H1 (cell line): ENCODE measurements at regions of chr17 and their contacts with region 1.

Region 1: GRCh38 chr17:65556014-65556909 is 5.2 kb downstream of the AXIN2 start:
- DNase-seq: peak in 1 of 2 experiments; percentile 96
- H3K4me3 ChIP-seq: peak overlapping the region; percentile 15 to 92 (median 61); a peak in 5 of 8 replicates
- H3K27ac ChIP-seq: no peak overlapping the region
- H3K4me1 ChIP-seq: peaks cover 16 to 26% (median 21%) of the 10 kb centered on the region in 4 experiments
- H3K27me3 ChIP-seq: peaks cover 0 to 2% (median 0%) of the 10 kb centered on the region in 4 experiments; a peak in 2 of 7 replicates
- CTCF ChIP-seq: peak; percentile 84 to 91 (median 86)
- EP300 ChIP-seq: no peak
- POLR2A ChIP-seq: no peak
- RAD21 ChIP-seq: peak; percentile 80 to 87

Region 2: DNA sequence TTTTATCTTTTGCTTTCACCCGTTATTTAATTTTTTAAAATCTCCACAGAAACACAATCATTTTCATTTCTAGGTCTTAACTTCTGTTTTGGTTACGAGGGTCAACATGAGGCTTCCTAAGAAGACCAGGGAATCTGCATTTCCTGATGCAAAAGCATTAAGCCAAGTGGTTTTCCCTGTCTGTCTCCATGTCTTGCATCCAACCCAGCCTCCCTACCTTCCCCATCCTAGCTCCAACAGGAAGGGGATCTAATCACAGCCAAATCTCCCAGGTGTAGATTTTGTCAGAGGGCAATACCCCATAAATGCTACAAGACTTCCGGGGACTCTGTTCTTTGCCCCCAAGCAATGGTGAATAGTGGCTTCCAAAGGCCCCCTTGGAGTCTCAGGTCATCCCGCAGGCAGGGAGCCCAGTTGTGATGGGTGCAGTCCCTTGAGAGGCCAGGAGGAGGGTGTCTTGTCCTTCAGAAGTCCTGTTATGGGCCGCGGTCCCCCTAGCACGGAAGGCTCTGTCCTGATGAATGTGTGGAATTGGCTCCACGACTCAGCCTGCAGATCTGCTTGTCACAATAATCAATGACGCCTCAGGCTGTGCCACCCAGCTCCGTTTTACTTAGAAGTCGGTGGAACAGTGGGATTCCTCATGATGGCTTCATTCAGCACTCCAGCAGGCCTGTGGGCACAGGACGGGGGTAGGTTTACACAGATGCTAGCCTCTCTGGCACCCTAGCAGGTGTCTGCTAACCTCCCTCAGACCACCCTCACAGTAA is 278.0 kb before region 1 on chr17:
- CTCF ChIA-PET with region 1: interaction called, 12 read pairs
- POLR2A ChIA-PET with region 1: no interaction called
- DNase-seq: peak in 1 of 2 experiments; percentile 78
- H3K4me3 ChIP-seq: no peak overlapping the region
- H3K27ac ChIP-seq: no peak overlapping the region
- H3K4me1 ChIP-seq: peaks cover 0 to 6% (median 0%) of the 10 kb centered on the region in 4 experiments; a peak in 2 of 7 replicates
- H3K27me3 ChIP-seq: no peaks in the 10 kb centered on the region
- CTCF ChIP-seq: peak; percentile 84 to 92 (median 88)
- EP300 ChIP-seq: no peak
- POLR2A ChIP-seq: no peak
- RAD21 ChIP-seq: peak; percentile 96 to 97

Region 3: DNA sequence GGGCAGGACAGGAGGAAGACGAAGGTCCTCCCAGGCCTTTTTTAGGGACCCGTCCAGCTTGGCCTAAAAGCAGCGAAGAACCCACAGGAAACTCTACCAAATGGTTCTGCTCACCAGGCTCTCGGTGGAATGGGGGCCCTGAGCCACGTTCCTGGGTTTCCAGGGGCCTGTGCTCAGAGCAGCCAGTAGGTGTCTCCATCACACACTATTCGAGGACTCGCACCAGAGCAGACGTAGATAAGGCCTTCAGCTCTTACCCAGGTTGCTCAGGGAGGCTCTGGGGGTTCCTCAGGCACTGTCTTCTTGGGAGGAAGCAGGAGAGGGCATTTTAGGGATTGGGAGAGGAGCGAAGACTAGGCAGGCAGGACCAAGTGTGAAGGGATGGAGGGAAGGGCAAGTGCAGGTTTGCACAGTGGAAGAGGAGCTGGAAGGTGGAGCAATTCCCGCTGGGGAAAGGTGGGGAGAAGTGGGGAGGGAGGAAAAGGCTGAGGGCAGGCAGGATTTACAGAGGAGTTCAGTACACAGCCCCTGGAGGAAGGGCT is 262.0 kb before region 1 on chr17:
- CTCF ChIA-PET with region 1: interaction called, 18 read pairs
- POLR2A ChIA-PET with region 1: no interaction called
- DNase-seq: peak; percentile 34 to 77
- H3K4me3 ChIP-seq: no peak overlapping the region
- H3K27ac ChIP-seq: no peak overlapping the region
- H3K4me1 ChIP-seq: peaks cover 0 to 10% (median 7%) of the 10 kb centered on the region in 4 experiments; a peak in 5 of 7 replicates
- H3K27me3 ChIP-seq: no peaks in the 10 kb centered on the region
- CTCF ChIP-seq: peak; percentile 80 to 96 (median 83)
- EP300 ChIP-seq: no peak
- POLR2A ChIP-seq: no peak
- RAD21 ChIP-seq: peak; percentile 86 to 93

Region 4: DNA sequence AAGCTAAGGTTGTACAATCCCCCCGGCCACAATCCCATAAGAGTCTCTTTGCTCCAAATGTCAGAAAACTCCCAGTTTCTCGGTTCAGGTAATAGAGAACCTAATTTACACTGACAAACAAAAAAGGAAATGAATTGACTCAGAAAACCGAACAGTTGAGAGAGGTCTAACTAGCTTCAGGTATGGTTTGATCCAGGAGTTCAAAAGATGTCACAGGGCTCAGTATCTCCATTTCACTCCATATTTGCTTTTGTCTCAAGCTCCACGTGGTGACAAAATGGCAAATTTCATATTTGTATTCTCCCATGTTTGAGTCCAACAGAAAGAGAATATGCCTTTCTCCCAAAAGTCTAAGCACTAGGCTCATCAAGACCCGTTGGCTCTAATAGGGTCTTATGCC is 112.2 kb before region 1 on chr17:
- CTCF ChIA-PET with region 1: no interaction called
- POLR2A ChIA-PET with region 1: no interaction called
- DNase-seq: no peak
- H3K4me3 ChIP-seq: no peak overlapping the region
- H3K27ac ChIP-seq: no peak overlapping the region
- H3K4me1 ChIP-seq: no peaks in the 10 kb centered on the region
- H3K27me3 ChIP-seq: no peaks in the 10 kb centered on the region
- CTCF ChIP-seq: no peak
- EP300 ChIP-seq: no peak
- POLR2A ChIP-seq: no peak
- RAD21 ChIP-seq: no peak

Region 5: GRCh38 chr17:65455972-65456343 is 100.3 kb before region 1 on chr17:
- CTCF ChIA-PET with region 1: interaction called, 22 read pairs
- POLR2A ChIA-PET with region 1: interaction called, 7 read pairs
- DNase-seq: peak; percentile 47 to 48
- H3K4me3 ChIP-seq: no peak overlapping the region
- H3K27ac ChIP-seq: no peak overlapping the region
- H3K4me1 ChIP-seq: peaks cover 8 to 21% (median 11%) of the 10 kb centered on the region in 4 experiments
- H3K27me3 ChIP-seq: no peaks in the 10 kb centered on the region; a peak in 2 of 7 replicates
- CTCF ChIP-seq: peak; percentile 56 to 74 (median 72)
- EP300 ChIP-seq: no peak
- POLR2A ChIP-seq: no peak
- RAD21 ChIP-seq: peak; percentile 87 to 94

Region 6: DNA sequence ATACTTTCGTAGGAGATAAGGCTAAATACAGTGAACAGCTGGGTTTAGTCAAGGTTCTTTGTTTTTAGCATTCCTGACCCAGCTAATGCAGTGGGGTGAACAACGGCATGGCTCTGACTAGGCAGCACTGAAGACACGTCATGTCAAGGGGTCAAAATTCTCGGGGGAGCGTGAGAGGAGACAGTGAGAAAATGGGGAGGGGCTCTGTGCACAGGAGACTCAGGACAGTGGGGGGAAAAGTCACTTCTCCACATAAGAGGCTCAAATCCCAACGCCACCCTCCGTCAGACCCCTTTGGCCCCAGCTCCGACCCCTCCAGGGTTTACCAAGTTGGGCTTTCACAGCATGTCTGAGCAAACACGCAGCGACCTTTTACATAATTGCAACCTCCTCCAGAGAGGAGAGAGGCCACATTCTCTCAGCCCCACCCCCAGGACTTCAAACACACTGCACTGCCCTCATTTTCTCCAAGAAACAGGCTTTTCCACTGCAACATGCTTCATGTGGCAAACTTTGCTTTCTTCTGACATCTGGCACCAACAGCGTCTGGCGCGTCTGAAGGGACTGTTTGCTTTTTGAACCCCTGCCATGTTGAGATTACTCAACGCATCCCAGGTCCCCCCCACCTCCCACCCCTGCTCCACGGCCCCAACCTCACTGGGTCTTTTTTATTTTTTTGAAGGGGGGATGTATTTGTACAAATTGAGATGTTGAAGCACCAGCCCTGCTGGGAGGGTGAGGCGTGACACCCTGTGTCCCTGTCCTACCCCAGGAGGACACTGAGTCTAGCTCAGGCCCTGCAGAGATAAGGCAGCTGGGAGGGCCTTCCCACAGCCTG is 24.8 kb before region 1 on chr17:
- CTCF ChIA-PET with region 1: interaction called, 11 read pairs
- POLR2A ChIA-PET with region 1: interaction called, 9 read pairs
- DNase-seq: no peak
- H3K4me3 ChIP-seq: no peak overlapping the region; a peak in 1 of 8 replicates
- H3K27ac ChIP-seq: no peak overlapping the region
- H3K4me1 ChIP-seq: peaks cover 6 to 22% (median 17%) of the 10 kb centered on the region in 4 experiments
- H3K27me3 ChIP-seq: no peaks in the 10 kb centered on the region
- CTCF ChIP-seq: no peak
- EP300 ChIP-seq: no peak
- POLR2A ChIP-seq: no peak
- RAD21 ChIP-seq: peak; percentile 0 to 18; a peak in 1 of 4 replicates

Region 7: DNA sequence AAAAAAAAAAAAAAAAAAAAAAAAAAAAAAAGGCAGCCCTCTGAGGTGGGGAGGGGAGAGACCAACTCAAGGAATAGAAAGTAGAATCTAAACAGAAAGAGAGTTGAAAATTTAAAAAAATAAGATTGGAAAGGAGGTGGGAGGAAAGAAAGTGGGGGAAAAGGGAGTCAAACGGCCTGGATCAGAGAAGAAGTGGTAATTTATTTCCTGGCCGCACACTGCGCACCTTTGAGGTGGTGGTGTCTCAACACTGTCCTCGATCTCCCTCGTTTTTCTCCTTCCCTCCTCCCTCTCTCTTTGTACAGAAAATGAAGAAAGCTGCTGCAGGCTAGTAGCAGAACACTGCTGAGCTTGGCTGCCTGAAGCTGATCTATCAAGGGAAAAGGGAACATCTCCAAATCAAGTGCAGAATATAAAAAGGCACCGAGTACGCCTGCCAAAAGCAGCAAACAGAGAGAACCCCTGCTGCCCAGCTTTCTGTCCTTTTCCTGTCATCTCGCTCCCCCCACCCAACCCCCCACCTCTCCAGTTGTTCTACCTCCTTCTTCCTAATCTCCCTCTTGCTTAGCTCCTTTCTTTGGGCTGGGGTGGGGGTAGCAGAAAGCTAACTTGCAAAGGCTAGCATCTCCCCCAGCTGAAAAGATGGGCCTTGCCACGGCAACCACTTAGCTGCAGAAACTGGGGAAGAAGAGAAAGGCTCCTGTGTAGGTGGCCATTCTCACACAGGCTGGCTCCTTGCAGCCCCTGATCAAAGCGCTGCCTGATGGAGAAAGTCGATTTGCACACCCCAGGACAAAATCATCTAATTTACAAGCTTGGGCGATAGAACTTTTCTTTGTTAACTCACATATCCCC is 17.4 kb before region 1 on chr17:
- CTCF ChIA-PET with region 1: interaction called, 62 read pairs
- POLR2A ChIA-PET with region 1: interaction called, 10 read pairs
- DNase-seq: no peak
- H3K4me3 ChIP-seq: no peak overlapping the region; a peak in 1 of 8 replicates
- H3K27ac ChIP-seq: no peak overlapping the region
- H3K4me1 ChIP-seq: peaks cover 2 to 15% (median 6%) of the 10 kb centered on the region in 4 experiments; a peak in 5 of 7 replicates
- H3K27me3 ChIP-seq: no peaks in the 10 kb centered on the region
- CTCF ChIP-seq: no peak
- EP300 ChIP-seq: no peak
- POLR2A ChIP-seq: no peak
- RAD21 ChIP-seq: no peak

Region 8: DNA sequence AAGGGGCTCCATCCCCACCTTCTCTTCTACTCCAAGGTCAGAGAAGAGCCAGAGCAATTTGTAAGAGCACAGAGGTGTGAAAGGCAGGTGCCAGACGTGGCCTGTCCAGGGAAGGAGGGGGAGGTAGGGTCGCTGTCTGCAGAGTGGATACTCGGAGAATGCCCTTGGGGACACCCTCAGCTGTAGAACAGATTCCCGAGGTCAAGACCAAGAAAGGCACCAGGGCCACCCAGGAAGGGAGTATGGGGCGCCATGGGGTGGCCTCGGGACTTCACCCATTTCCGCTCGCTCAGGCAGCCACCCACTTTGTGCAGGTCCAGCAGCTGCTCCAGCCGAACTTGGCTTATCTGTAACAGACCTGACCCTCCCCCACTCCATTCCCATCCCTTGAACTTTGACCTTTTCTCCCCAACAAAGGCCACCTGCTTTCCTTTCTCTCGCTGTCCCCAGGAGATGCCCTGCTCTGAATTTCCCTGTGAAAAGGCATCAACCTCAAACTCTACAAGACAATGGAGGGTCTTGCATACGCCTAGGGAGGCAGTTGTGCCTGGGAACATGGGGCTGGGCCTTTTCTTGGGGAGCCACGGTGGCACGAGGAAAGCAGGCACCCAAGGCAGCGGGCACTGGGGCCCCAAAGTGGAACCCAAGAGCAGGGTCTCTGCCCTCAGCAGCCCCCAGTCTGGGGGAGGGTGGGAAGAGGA is 16.5 kb after region 1 on chr17:
- CTCF ChIA-PET with region 1: interaction called, 3 read pairs
- POLR2A ChIA-PET with region 1: interaction called, 22 read pairs
- DNase-seq: peak; percentile 85 to 96
- H3K4me3 ChIP-seq: peak overlapping the region in 3 of 4 experiments; percentile 8 to 43 (median 20); a peak in 4 of 8 replicates
- H3K27ac ChIP-seq: peak overlapping the region; percentile 93
- H3K4me1 ChIP-seq: peaks cover 10 to 22% (median 15%) of the 10 kb centered on the region in 4 experiments
- H3K27me3 ChIP-seq: no peaks in the 10 kb centered on the region
- CTCF ChIP-seq: no peak
- EP300 ChIP-seq: peak in 1 of 2 experiments; percentile 93; a peak in 1 of 3 replicates
- POLR2A ChIP-seq: peak; percentile 32 to 72; a peak in 2 of 3 replicates
- RAD21 ChIP-seq: no peak; a peak in 1 of 4 replicates